ENCODE measurements at regions of chr20 and their contacts with region 1.

Region 1: DNA sequence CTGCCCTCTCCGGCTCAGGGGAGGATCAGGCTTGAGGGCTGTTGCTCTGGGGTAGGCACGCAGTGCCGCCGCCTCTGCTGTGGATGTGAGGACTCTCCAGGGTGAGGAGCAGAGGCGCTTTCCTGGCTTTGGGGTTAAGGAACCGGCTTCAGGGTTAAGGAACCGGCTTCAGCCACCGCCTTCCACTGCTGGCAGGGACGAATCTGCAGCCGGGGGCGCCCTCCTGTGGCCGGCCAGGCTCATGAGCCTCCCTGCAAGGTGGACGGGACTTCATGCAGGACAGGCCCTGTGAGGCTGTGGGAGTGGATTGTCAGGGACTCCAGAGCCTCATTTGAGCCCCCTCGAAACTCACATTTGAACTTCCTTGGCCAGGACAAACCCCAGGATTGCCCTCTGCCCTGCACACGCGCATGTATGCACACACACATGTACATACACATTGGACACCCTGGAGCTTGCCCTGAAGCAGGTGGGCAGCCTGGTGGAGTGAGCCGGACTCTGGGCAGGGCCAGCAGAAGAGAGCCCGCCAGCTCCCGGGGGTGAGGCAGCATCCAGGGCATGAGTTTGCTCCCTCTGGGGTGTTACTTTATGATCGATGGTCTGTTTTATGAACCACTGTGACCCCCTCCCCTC is 146.8 kb downstream of the PHACTR3 start:
- DNase-seq: peak; percentile 73
- ATAC-seq: peak; percentile 75 to 79

Region 2: DNA sequence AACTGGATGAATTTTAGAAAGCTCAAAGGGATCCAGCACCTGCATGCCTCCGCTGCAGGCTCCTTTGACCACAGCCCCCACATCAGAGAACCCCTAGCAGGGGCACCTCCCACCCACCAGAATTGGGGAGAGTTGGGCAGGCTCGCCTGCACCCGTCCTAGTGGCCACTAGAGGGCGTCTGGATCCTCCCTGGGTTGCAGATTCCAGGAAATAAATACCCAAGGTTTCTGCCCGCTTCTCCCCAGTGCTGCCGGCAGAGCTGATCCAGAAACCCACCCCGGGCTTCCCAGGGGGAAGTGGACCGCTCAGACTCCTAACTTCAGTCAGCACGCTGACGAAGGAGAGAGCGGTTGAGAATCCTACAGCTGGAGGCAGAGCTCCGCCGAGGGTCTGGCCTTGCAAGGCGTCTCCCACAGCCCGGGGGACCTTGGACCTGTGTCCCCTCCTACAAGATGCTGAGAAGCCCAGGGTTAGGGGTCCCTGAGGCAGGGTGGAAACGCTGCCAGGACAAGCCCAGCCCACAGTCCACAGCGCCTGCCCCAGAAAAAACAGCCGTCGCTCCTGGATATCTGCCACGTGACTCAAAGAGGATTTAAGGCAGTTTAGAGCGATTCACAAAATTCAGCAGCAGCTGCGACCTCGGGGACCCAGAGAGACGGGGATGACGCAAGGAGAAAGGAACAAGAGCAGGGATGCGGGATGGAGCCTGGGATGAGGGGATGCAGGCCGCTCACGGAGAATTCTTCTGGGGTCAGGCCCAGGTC is 179.4 kb before region 1 on chr20:
- intact Hi-C with region 1: loop called in 1 of 2 experiments (anchors 2 kb)
- DNase-seq: peak; percentile 72
- ATAC-seq: peak; percentile 56 to 81

Region 3: DNA sequence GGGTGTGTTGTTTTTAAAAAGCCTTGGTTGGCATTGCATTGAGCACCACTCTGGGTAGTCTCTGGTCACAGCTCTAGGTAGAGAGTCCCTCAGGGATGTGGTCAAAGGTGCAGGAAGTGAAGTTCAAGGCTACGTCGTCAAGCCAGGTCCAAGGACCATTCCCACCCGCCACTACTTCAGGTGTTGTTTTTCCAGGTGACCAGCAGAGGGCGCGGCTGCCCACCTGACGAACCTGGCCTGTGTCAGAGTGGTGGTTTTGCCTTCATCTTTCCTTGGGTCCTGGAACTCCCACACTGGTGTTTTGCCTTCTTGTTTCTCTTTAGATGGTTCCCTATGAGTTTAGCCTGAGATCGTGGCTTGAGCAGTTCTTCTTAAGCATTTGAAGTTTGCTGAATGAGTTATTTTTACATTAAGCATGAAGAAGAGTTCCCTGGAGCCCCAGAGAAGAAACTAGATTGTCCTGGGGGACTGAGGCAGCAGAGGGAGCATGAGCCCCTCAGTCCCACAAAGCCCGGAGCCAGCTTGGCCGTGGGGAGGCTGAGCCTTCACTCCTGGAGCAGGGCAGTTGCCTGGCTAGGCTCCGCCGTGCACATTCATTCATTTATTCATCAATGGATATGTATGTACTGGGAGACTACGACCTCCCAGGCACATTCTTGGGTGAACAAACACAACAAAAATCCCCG is 152.4 kb before region 1 on chr20:
- intact Hi-C with region 1: loop called (anchors 2 to 5 kb)
- DNase-seq: no peak
- ATAC-seq: peak in 1 of 2 donors; percentile 60

Region 4: GRCh38 chr20:59835448-59836395 is 84.5 kb after region 1 on chr20:
- intact Hi-C with region 1: no loop called
- DNase-seq: peak; percentile 57
- ATAC-seq: peak; percentile 77 to 91

Measured in left cardiac atrium (tissue), 4 donors.